HEK293 (cell line): ENCODE measurements at regions of chr2 and their contacts with region 1.

Region 1: DNA sequence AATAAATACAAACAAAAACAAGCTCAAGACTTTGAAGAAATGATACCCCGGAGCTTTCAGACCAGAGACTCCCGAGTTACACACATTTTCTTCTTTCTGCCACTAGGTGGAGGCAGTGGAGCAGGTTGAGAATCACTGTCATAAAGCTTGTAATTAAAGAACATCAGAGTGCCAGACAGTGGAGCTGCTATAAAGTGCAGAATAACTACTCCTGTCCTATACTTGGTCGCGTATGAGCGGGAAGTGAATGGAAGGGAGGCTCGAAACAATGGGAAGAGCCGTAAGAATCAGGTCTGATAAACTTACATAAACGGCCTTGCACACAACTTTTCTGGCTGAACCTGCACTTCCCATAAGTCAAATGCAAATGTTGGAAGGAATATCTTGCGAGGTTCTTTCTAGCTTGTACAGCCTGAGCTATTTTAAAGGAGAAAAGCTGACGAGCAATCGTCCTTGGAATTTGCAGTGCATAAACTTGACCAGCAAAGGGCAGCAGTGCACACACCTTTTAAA is 189.0 kb downstream of the RPIA start:
- H3K4me3 ChIP-seq: peak overlapping the region; percentile 18
- H3K27ac ChIP-seq: no peak overlapping the region
- H3K4me1 ChIP-seq: no peaks in the 10 kb centered on the region
- CTCF ChIP-seq: peak; percentile 63

Region 2: GRCh38 chr2:88857951-88858411 is 22.5 kb before region 1 on chr2:
- CTCF ChIA-PET with region 1: interaction called, 24 read pairs
- POLR2A ChIA-PET with region 1: no interaction called
- H3K4me3 ChIP-seq: no peak overlapping the region
- H3K27ac ChIP-seq: no peak overlapping the region
- H3K4me1 ChIP-seq: no peaks in the 10 kb centered on the region
- CTCF ChIP-seq: no peak

Region 3: GRCh38 chr2:88896971-88897370 is 16.5 kb after region 1 on chr2:
- CTCF ChIA-PET with region 1: interaction called, 24 read pairs
- POLR2A ChIA-PET with region 1: no interaction called
- H3K4me3 ChIP-seq: no peak overlapping the region
- H3K27ac ChIP-seq: no peak overlapping the region
- H3K4me1 ChIP-seq: no peaks in the 10 kb centered on the region
- CTCF ChIP-seq: no peak

Region 4: GRCh38 chr2:88919087-88919738 is 38.7 kb after region 1 on chr2:
- CTCF ChIA-PET with region 1: interaction called, 10 read pairs
- POLR2A ChIA-PET with region 1: no interaction called
- H3K4me3 ChIP-seq: no peak overlapping the region
- H3K27ac ChIP-seq: no peak overlapping the region
- H3K4me1 ChIP-seq: no peaks in the 10 kb centered on the region
- CTCF ChIP-seq: no peak